ENCODE measurements at regions of chr13 and their contacts with region 1.

Region 1: DNA sequence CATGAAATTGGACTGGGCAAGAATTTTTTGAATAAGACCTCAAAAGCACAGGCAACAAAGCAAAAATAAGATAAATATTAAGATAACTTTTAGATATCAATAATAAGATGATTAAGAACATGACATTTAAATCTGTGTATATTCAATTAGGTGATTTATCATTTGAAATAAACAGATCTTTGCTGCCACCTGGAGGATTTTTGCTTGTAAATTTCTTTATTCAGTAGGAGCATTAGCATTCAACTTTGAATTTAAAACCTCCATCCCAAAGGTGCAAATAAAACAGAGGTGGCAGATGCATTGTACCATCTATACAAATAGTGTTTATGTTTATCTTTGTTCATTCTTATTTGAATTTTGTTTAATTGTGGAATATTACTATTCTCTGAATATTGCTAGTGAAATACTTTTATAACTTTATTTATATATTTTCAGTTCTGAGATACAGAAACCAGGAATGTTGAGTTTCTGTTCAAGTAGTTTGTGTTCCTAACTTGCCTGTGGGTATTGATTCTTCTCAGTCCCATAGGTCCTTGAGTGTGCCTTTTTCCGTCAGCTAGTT is 20.9 kb downstream of the COG6 start:
- H3K4me3 Mint-ChIP-seq: no peak overlapping the region
- H3K27ac Mint-ChIP-seq: no peak overlapping the region
- H3K4me1 Mint-ChIP-seq: no peaks in the 10 kb centered on the region
- H3K27me3 Mint-ChIP-seq: no peaks in the 10 kb centered on the region

Region 2: DNA sequence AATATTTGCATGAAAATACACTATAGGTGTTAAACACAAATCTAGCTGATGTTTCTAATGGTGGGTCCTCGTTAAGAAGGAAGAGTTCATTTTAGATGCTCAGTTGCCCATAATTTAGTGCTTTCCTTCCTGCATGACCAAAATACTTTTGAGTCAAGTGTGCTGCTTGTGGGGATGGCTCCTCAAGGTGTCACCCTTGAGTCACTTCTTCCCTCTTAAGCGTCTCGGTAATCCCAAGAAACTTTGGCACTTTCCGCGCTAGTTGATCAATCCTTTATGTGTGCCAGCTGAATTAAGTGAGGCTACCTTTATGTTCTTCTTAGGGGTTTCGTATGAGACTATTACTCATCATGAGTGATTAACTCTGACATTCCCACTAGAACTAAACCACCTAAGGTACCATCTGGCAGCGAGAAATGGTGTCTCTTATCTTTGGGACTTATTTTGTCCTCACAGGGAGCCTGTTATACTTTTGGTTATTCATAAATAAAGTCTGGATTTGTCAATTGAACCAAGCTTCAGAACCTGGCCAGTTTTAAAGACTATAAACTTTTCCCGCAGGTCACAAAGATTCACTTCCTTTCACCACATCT is 531.4 kb before region 1 on chr13:
- intact Hi-C with region 1: loop called (anchors 2 kb)
- H3K4me3 Mint-ChIP-seq: no peak overlapping the region
- H3K27ac Mint-ChIP-seq: no peak overlapping the region
- H3K4me1 Mint-ChIP-seq: no peaks in the 10 kb centered on the region
- H3K27me3 Mint-ChIP-seq: no peaks in the 10 kb centered on the region